ENCODE measurements at regions of chr6 and their contacts with region 1.

Region 1: DNA sequence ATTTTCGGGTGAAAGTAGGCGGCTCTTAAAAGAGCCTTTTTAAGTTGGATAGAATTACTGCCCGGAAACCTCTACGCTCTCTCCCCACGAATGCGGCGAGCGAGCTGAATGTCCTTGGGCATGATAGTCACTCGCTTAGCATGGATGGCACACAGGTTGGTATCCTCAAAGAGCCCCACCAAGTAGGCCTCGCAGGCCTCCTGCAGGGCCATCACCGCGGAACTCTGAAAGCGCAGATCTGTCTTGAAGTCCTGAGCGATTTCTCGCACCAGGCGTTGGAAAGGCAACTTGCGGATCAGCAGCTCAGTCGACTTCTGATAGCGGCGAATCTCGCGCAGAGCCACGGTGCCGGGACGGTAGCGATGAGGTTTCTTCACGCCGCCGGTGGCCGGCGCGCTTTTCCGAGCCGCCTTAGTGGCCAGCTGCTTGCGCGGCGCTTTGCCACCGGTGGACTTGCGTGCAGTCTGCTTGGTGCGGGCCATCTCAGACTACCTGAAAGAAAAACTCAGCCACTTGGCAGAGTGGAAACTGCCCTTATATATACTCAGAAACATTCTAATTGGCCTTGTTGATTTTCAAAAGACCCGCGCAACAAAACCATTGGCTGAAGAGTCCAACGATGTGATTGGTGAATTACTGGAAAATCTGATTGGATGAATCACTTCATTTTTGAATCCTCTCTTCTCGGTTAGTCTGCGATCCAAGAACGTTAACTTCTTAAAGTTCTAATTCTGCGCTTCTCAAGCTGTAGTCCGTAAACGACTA is 93.9 kb upstream of the BTN3A2 start:
- DNase-seq: peak; percentile 84 to 87 (median 85)
- H3K4me3 ChIP-seq: peak overlapping the region; percentile 53 to 65
- H3K4me3 Mint-ChIP-seq: peak overlapping the region in 1 of 8 donors; percentile 85
- H3K27ac ChIP-seq: peak overlapping the region; percentile 83
- H3K27ac Mint-ChIP-seq: peak overlapping the region in 5 of 7 donors; percentile 68 to 97 (median 82)
- H3K4me1 ChIP-seq: peaks cover 31% of the 10 kb centered on the region
- H3K4me1 Mint-ChIP-seq: peaks cover 0 to 22% (median 15%) of the 10 kb centered on the region in 4 donors
- H3K27me3 ChIP-seq: no peaks in the 10 kb centered on the region
- H3K27me3 Mint-ChIP-seq: no peaks in the 10 kb centered on the region

Region 2: GRCh38 chr6:26031595-26032339 is 239.3 kb before region 1 on chr6:
- CTCF ChIA-PET with region 1: no interaction called
- POLR2A ChIA-PET with region 1: interaction called, 37 read pairs
- intact Hi-C with region 1: no loop called
- DNase-seq: peak; percentile 86 to 94 (median 89)
- H3K4me3 ChIP-seq: peak overlapping the region; percentile 53 to 67
- H3K4me3 Mint-ChIP-seq: peak overlapping the region; percentile 91 to 99 (median 94)
- H3K27ac ChIP-seq: peak overlapping the region; percentile 71
- H3K27ac Mint-ChIP-seq: peak overlapping the region; percentile 89 to 98 (median 96)
- H3K4me1 ChIP-seq: peaks cover 35% of the 10 kb centered on the region
- H3K4me1 Mint-ChIP-seq: peaks cover 33 to 54% (median 44%) of the 10 kb centered on the region in 4 donors
- H3K27me3 ChIP-seq: no peaks in the 10 kb centered on the region
- H3K27me3 Mint-ChIP-seq: peaks cover 0 to 3% of the 10 kb centered on the region in 2 donors

Region 3: DNA sequence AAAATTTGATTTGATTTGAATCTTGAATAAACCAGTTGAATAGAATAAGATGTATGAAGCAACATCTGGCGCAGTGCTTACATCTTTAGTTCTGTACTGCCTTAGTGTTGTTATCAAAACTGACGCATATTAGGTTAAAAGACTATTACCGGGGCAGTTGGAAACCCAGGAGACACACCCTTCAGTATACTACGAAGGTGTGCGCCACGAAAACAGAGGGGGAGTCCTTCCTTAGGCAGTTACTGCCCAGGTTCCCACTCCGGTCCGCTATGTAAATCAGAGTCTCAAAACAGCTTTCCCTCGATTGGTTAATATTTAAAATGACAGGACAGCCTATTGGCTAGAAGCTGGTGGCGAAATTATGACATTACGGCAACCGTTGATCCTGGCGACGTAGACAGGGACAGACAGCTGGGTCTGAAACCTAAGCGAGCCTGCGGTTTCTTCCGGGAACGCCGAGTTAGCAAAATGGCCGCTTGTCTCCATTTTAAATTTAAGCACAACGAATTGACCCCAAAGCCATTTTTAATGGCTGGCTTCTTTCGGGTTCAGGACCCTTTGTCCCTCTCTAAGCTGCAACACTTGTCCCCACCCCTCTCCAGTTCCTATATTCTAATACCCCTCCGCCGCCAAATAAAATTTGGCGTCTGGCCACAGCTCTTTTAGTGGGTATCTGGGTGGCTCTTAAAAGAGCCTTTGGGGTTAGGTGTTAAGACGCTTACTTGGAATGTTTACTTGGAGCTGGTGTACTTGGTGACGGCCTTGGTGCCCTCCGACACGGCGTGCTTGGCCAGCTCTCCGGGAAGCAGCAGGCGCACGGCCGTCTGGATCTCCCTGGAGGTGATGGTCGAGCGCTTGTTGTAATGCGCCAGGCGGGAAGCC is 148.1 kb before region 1 on chr6:
- CTCF ChIA-PET with region 1: interaction called, 4 read pairs
- POLR2A ChIA-PET with region 1: interaction called, 148 read pairs
- intact Hi-C with region 1: loop called (anchors 1 kb)
- DNase-seq: peak; percentile 94 to 98 (median 98)
- H3K4me3 ChIP-seq: peak overlapping the region; percentile 87 to 98
- H3K4me3 Mint-ChIP-seq: peak overlapping the region; percentile 96 to 100 (median 100)
- H3K27ac ChIP-seq: peak overlapping the region; percentile 89
- H3K27ac Mint-ChIP-seq: peak overlapping the region; percentile 97 to 99 (median 99)
- H3K4me1 ChIP-seq: peaks cover 26% of the 10 kb centered on the region
- H3K4me1 Mint-ChIP-seq: peaks cover 20 to 54% (median 30%) of the 10 kb centered on the region in 4 donors
- H3K27me3 ChIP-seq: no peaks in the 10 kb centered on the region
- H3K27me3 Mint-ChIP-seq: peaks cover 0 to 3% of the 10 kb centered on the region in 2 donors

Region 4: GRCh38 chr6:26204332-26205165 is 66.5 kb before region 1 on chr6:
- CTCF ChIA-PET with region 1: interaction called, 24 read pairs
- POLR2A ChIA-PET with region 1: interaction called, 362 read pairs
- intact Hi-C with region 1: loop called (anchors 1 kb)
- DNase-seq: peak; percentile 85 to 95 (median 89)
- H3K4me3 ChIP-seq: peak overlapping the region; percentile 48 to 87
- H3K4me3 Mint-ChIP-seq: no peak overlapping the region
- H3K27ac ChIP-seq: peak overlapping the region; percentile 82
- H3K27ac Mint-ChIP-seq: no peak overlapping the region
- H3K4me1 ChIP-seq: peaks cover 39% of the 10 kb centered on the region
- H3K4me1 Mint-ChIP-seq: peaks cover 8 to 26% (median 13%) of the 10 kb centered on the region in 4 donors
- H3K27me3 ChIP-seq: no peaks in the 10 kb centered on the region
- H3K27me3 Mint-ChIP-seq: peaks cover 0 to 3% of the 10 kb centered on the region in 2 donors

Region 5: DNA sequence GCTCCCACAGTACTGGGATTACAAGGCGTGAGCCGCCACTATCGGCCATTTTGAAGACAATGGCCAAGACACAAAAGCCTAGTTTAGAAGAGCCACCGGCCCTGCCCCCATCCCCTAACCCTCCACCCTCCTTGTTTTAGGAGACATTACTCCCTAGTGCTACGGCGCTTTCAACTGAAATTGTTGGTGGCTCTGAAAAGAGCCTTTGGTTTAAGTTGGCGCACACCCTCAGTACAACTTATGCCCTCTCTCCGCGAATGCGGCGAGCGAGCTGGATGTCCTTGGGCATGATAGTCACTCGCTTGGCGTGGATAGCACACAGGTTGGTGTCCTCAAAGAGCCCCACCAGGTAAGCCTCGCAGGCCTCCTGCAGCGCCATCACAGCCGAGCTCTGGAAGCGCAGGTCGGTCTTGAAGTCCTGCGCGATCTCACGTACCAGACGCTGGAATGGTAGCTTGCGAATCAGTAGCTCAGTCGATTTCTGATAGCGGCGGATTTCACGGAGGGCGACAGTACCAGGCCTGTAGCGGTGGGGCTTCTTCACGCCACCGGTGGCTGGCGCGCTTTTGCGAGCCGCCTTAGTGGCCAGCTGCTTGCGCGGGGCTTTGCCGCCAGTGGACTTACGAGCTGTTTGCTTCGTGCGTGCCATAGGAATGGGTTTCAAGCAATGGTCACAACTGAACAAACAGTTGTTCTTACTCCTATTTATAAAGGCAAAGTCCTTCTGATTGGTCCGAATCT is 21.0 kb before region 1 on chr6:
- CTCF ChIA-PET with region 1: interaction called, 13 read pairs
- POLR2A ChIA-PET with region 1: interaction called, 19 read pairs
- intact Hi-C with region 1: loop called (anchors 1 kb)
- DNase-seq: peak; percentile 79 to 88 (median 83)
- H3K4me3 ChIP-seq: peak overlapping the region; percentile 86 to 88
- H3K4me3 Mint-ChIP-seq: peak overlapping the region; percentile 92 to 99 (median 98)
- H3K27ac ChIP-seq: peak overlapping the region; percentile 59
- H3K27ac Mint-ChIP-seq: peak overlapping the region; percentile 85 to 97 (median 94)
- H3K4me1 ChIP-seq: peaks cover 25% of the 10 kb centered on the region
- H3K4me1 Mint-ChIP-seq: peaks cover 28 to 53% (median 40%) of the 10 kb centered on the region in 4 donors
- H3K27me3 ChIP-seq: no peaks in the 10 kb centered on the region
- H3K27me3 Mint-ChIP-seq: no peaks in the 10 kb centered on the region

Region 6: DNA sequence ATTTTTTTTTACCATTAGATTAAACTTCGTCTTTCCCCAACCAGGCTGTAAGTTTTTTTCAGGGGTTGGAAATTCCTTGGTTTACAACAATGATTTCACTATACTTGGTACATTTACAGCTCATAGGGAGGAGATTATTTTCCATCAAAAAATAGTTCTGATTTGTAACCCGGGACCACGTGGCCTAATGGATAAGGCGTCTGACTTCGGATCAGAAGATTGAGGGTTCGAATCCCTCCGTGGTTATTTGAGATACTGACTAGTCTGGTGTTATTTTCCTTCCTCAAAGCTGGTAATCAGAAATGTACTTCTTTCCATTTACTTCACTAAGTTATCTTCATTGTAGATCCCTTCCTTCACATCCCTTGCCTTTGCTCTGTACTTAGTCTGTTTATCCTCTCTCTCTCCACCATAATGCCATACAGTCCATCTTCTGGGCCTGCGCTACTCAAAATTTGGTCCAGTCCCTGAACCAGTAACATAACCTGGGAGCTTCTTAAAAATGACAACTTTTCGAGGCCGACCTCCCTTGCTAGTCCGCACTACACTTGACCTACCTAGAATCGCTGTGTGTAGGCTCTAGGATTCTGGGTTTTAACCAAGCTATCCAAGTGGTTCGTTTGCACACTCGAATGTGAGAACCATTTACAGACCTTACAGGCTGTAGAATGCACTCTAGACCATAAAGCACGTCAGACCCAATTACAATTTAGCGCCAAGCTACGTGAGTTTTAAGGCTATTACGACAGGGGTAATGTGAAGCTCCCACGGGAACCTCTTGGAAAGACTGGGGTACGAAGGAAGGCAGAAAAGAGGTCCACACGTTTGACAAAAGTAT is 51.8 kb after region 1 on chr6:
- CTCF ChIA-PET with region 1: interaction called, 3 read pairs
- POLR2A ChIA-PET with region 1: interaction called, 32 read pairs
- intact Hi-C with region 1: no loop called
- DNase-seq: peak; percentile 75 to 80 (median 79)
- H3K4me3 ChIP-seq: peak overlapping the region in 1 of 2 donors; percentile 62
- H3K4me3 Mint-ChIP-seq: peak overlapping the region; percentile 86 to 92 (median 88)
- H3K27ac ChIP-seq: no peak overlapping the region
- H3K27ac Mint-ChIP-seq: peak overlapping the region; percentile 42 to 98 (median 82)
- H3K4me1 ChIP-seq: peaks cover 12% of the 10 kb centered on the region
- H3K4me1 Mint-ChIP-seq: peaks cover 19 to 30% (median 24%) of the 10 kb centered on the region in 4 donors
- H3K27me3 ChIP-seq: no peaks in the 10 kb centered on the region
- H3K27me3 Mint-ChIP-seq: peaks cover 8 to 22% of the 10 kb centered on the region in 2 donors

Region 7: GRCh38 chr6:27146706-27147505 is 875.8 kb after region 1 on chr6:
- CTCF ChIA-PET with region 1: no interaction called
- POLR2A ChIA-PET with region 1: interaction called, 33 read pairs
- intact Hi-C with region 1: loop called (anchors 5 kb)
- DNase-seq: peak; percentile 85 to 96 (median 94)
- H3K4me3 ChIP-seq: peak overlapping the region; percentile 76 to 77
- H3K4me3 Mint-ChIP-seq: no peak overlapping the region
- H3K27ac ChIP-seq: peak overlapping the region; percentile 97
- H3K27ac Mint-ChIP-seq: no peak overlapping the region
- H3K4me1 ChIP-seq: peaks cover 22% of the 10 kb centered on the region
- H3K4me1 Mint-ChIP-seq: peaks cover 10 to 20% (median 13%) of the 10 kb centered on the region in 4 donors
- H3K27me3 ChIP-seq: no peaks in the 10 kb centered on the region
- H3K27me3 Mint-ChIP-seq: no peaks in the 10 kb centered on the region

Measured in CD4-positive, alpha-beta memory T cell (primary cell).